ENCODE measurements at regions of chr15 and their contacts with region 1.

Region 1: DNA sequence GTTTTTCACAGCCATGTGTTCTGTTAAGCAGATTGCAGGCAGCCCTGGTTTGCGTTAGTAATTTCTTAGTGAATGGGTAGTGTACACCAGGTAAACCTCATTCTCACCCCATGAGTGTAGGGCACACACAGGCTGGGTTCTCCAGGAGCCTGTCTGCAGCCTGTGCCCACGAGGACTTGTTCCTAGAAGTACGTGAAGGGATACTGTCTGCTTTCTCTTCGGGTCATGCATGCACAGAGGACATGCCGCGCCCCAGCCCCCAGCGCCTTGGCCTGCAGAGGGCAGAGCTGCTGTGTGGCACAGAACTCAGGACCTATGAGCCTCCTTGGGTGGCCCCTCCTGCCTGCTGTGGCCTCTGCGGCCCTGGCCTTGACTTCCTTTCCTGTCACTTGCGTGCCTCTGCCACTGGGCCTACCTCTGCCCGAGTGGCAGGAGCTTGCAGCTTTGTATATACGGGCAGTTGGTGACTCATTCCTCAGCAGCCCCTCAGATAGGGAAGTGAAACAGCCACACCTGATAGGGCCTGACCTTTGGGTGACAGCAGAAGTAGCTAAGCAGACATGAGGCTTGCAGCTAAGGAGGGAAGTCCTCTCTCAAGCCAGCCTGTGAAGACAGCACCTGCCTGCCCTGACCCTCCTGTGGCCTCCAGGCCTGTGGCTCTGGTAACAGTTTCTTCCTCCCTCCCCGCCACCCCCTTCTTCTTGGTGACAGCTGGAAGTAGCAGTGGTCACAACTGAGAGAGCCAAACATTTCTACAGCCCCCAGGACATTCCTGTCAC is 19.5 kb downstream of the PPCDC start:
- DNase-seq: peak; percentile 94
- ATAC-seq: peak; percentile 89
- H3K4me3 ChIP-seq: no peak overlapping the region
- H3K4me3 Mint-ChIP-seq: peak overlapping the region; percentile 25
- H3K27ac ChIP-seq: peak overlapping the region; percentile 76 to 80
- H3K27ac Mint-ChIP-seq: peak overlapping the region; percentile 89
- H3K4me1 ChIP-seq: peaks cover 48 to 65% of the 10 kb centered on the region in 2 donors
- H3K4me1 Mint-ChIP-seq: peaks cover 57% of the 10 kb centered on the region
- H3K27me3 ChIP-seq: no peaks in the 10 kb centered on the region
- H3K27me3 Mint-ChIP-seq: no peaks in the 10 kb centered on the region
- CTCF ChIP-seq: peak; percentile 61

Region 2: DNA sequence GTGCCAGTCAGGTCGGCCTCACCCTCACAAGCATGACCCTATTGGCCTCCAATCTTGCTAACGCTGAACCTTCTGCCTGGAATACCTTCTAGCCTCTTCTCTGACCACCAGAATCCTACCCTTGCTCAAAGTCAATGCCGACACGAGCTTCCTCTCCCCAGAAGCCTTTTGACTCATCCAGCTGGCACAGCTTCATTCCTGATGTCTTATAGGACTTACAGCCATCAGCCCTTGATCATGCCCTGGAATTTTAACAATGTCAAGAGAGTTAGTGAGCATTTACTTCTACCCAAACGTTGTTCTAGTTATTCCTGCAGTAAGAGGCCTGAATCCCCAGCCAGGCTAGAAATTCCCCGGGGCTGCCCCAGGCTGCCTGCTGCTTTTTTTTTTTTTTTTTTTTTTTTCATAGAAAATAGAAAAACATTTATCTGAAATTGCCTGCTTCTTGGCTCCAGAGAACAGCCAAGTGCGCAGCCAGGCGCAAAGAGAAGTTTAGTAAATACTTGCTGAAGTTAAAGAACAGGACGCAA is 290.4 kb before region 1 on chr15:
- CTCF ChIA-PET with region 1: no interaction called
- POLR2A ChIA-PET with region 1: no interaction called
- intact Hi-C with region 1: no loop called
- DNase-seq: no peak
- ATAC-seq: no peak
- H3K4me3 ChIP-seq: no peak overlapping the region
- H3K4me3 Mint-ChIP-seq: no peak overlapping the region
- H3K27ac ChIP-seq: no peak overlapping the region
- H3K27ac Mint-ChIP-seq: no peak overlapping the region
- H3K4me1 ChIP-seq: no peaks in the 10 kb centered on the region
- H3K4me1 Mint-ChIP-seq: no peaks in the 10 kb centered on the region
- H3K27me3 ChIP-seq: no peaks in the 10 kb centered on the region
- H3K27me3 Mint-ChIP-seq: peaks cover 16% of the 10 kb centered on the region
- CTCF ChIP-seq: no peak

Region 3: GRCh38 chr15:75023181-75023871 is 19.6 kb before region 1 on chr15 and contains the start of gene PPCDC:
- CTCF ChIA-PET with region 1: interaction called, 65 read pairs
- POLR2A ChIA-PET with region 1: interaction called, 5 read pairs
- intact Hi-C with region 1: loop called (anchors 1 kb)
- DNase-seq: peak; percentile 93
- ATAC-seq: peak; percentile 100
- H3K4me3 ChIP-seq: peak within 1 kb of the TSS; percentile 72 to 96 (median 94)
- H3K4me3 Mint-ChIP-seq: peak within 1 kb of the TSS; percentile 97
- H3K27ac ChIP-seq: peak within 1 kb of the TSS; percentile 49 to 72
- H3K27ac Mint-ChIP-seq: peak within 1 kb of the TSS; percentile 94
- H3K4me1 ChIP-seq: peaks cover 5 to 18% of the 10 kb centered on the region in 2 donors
- H3K4me1 Mint-ChIP-seq: peaks cover 14% of the 10 kb centered on the region
- H3K27me3 ChIP-seq: peaks cover 0 to 33% (median 15%) of the 10 kb centered on the region in 4 experiments
- H3K27me3 Mint-ChIP-seq: peaks cover 23% of the 10 kb centered on the region
- CTCF ChIP-seq: no peak
- total RNA-seq, gene PPCDC: 14.8 and 15.1 TPM in 2 replicates

Region 4: DNA sequence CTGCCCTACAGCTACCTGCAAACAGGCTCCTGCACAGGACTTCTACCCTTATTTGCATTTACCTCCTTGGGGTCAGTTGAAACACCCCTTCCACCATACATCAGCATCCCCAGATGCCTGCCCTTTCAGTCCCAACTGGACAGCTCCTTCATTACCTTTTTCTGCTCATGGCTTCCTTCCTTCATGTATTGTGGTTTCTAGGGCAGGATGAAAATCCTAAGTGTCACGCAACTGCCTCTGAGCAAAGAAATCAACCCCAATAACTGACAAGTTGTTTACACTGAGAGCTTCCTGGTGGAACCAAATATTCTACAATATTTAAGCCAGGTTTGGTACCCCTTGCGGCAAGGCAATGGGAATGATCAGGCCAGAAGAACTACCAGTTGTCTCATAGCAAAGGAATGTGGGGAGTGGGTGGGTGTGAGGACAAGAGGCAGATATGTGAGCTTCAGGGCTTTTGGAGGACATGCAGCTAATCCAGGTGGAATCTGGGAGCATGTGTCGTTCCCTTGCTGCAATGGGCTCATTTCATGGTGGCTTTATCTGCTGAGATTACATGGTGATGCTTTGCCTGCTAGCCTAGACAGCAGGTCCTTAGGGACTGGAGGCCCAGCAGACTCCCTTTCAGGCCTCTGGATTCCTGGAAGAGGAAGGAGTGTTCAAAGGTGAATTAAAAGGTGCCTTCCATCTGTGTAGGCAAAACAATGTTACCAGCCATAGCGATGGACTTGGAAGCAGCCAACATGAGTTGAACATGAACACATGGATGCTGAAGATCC is 15.4 kb after region 1 on chr15:
- CTCF ChIA-PET with region 1: interaction called, 21 read pairs
- POLR2A ChIA-PET with region 1: no interaction called
- intact Hi-C with region 1: no loop called
- DNase-seq: no peak
- ATAC-seq: no peak
- H3K4me3 ChIP-seq: no peak overlapping the region
- H3K4me3 Mint-ChIP-seq: no peak overlapping the region
- H3K27ac ChIP-seq: no peak overlapping the region
- H3K27ac Mint-ChIP-seq: no peak overlapping the region
- H3K4me1 ChIP-seq: no peaks in the 10 kb centered on the region
- H3K4me1 Mint-ChIP-seq: no peaks in the 10 kb centered on the region
- H3K27me3 ChIP-seq: no peaks in the 10 kb centered on the region
- H3K27me3 Mint-ChIP-seq: no peaks in the 10 kb centered on the region
- CTCF ChIP-seq: no peak

Region 5: GRCh38 chr15:75076277-75076676 is 33.4 kb after region 1 on chr15:
- CTCF ChIA-PET with region 1: interaction called, 24 read pairs
- POLR2A ChIA-PET with region 1: interaction called, 6 read pairs
- intact Hi-C with region 1: loop called (anchors 2 kb)
- DNase-seq: no peak
- ATAC-seq: no peak
- H3K4me3 ChIP-seq: no peak overlapping the region
- H3K4me3 Mint-ChIP-seq: no peak overlapping the region
- H3K27ac ChIP-seq: no peak overlapping the region
- H3K27ac Mint-ChIP-seq: no peak overlapping the region
- H3K4me1 ChIP-seq: peaks cover 17 to 23% of the 10 kb centered on the region in 2 donors
- H3K4me1 Mint-ChIP-seq: peaks cover 32% of the 10 kb centered on the region
- H3K27me3 ChIP-seq: no peaks in the 10 kb centered on the region
- H3K27me3 Mint-ChIP-seq: no peaks in the 10 kb centered on the region
- CTCF ChIP-seq: no peak

Region 6: DNA sequence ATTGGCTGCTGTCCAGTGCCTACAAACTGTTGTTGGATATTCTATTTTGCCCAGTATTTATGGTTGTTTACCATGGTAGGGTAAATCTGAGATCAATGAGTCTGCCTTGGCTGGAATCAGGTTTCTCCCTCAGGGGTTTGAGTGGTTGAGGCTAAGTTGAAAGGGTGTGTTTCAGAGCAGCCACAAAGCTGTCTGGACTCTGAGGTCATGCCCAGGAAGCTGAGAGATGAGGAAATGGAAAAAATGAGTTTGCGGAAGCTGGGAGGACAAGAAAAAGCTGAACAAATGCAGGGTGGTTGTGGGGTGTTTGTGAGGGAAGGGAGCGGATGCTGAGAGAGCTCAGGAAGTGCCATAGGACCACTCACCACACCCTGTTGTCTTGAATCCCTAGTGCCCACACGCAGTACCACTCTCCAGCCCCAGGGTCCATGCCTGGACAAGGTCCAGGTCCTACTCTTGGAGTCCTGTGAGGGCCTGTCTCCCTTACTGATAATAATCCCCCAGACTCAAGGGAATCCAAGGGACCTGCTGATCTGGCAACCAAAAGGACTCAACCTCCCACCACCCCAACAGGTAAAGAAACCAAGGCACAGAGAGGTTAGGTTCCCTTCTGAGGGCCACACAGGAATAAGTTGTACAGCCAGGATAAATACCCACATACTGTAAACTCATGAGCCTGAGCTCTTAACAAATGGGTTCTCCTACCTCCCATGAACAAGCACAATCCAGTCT is 62.1 kb after region 1 on chr15:
- CTCF ChIA-PET with region 1: interaction called, 45 read pairs
- POLR2A ChIA-PET with region 1: interaction called, 7 read pairs
- intact Hi-C with region 1: loop called (anchors 2 kb)
- DNase-seq: peak; percentile 44
- ATAC-seq: peak; percentile 37
- H3K4me3 ChIP-seq: no peak overlapping the region
- H3K4me3 Mint-ChIP-seq: peak overlapping the region; percentile 66
- H3K27ac ChIP-seq: peak overlapping the region; percentile 5 to 10
- H3K27ac Mint-ChIP-seq: peak overlapping the region; percentile 92
- H3K4me1 ChIP-seq: peaks cover 37 to 45% of the 10 kb centered on the region in 2 donors
- H3K4me1 Mint-ChIP-seq: peaks cover 40% of the 10 kb centered on the region
- H3K27me3 ChIP-seq: peaks cover 0 to 11% (median 4%) of the 10 kb centered on the region in 4 experiments
- H3K27me3 Mint-ChIP-seq: peaks cover 23% of the 10 kb centered on the region
- CTCF ChIP-seq: no peak

Region 7: DNA sequence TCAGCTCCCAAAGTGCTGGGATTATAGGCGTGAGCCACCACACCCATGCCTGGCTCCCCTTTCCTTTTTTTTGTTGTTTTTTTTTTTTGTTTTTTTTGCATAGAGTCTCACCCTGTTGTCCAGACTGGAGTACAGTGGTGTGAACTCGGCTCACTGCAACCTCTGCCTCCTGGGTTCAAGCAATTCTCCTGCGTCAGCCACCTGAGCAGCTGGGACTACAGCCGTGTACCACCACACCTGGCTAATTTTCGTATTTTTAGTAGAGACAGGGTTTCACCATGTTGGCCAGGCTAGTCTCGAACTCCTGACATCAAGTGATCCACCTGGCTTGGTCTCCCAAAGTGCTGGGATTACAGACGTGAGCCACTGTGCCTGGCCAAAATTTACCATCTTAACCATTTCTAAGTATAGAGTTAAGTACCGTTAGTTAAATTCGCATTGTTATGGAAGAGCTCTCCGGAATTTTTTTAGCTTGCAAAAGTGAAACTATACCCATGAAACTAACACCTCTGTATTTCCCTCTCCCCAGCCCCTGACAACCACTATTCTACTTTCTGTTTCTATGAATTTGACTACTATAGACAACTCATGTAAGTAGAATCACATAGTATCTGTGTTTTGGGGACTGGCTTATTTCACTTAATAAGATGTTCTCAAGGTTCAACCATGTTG is 87.8 kb after region 1 on chr15:
- CTCF ChIA-PET with region 1: interaction called, 18 read pairs
- POLR2A ChIA-PET with region 1: no interaction called
- intact Hi-C with region 1: loop called (anchors 1 kb)
- DNase-seq: peak; percentile 70
- ATAC-seq: peak; percentile 93
- H3K4me3 ChIP-seq: peak overlapping the region in 4 of 5 experiments; percentile 16 to 51 (median 40)
- H3K4me3 Mint-ChIP-seq: peak overlapping the region; percentile 73
- H3K27ac ChIP-seq: no peak overlapping the region
- H3K27ac Mint-ChIP-seq: peak overlapping the region; percentile 27
- H3K4me1 ChIP-seq: peaks cover 11 to 18% of the 10 kb centered on the region in 2 donors
- H3K4me1 Mint-ChIP-seq: peaks cover 17% of the 10 kb centered on the region
- H3K27me3 ChIP-seq: no peaks in the 10 kb centered on the region
- H3K27me3 Mint-ChIP-seq: no peaks in the 10 kb centered on the region
- CTCF ChIP-seq: no peak

Region 8: DNA sequence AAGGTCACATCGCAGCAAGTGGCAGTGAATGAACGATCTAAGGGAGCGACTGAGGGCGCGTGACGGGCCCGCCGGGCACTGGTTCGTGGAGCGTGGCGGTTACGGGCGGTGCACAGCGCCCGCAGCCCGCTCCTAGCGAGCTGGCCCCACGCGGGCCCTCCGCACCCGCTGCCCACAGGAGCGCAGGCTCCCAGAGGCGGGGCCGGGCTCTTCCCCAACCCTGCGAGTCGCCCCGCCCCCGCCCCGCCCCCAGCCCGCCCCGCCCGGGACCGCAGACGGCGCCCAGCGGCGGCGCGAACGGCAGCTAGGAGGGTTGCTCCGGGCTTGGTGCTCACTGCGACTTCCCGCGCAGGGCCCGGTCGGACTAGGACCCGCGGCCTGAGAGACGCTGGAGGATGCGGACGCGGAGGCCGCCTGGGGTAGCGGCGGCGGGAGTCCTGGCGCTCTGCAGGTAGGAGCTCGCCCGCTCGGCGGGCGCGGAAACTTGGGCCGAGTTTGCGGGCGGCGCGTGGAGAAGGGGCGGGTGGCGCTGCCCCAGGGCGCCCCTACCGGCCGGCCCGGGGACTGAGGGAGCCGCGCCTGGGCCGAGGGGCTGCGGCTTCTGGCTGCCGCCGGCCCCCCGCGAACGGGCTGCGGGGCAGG is 158.8 kb after region 1 on chr15 and contains the start of gene C15orf39:
- CTCF ChIA-PET with region 1: interaction called, 251 read pairs
- POLR2A ChIA-PET with region 1: interaction called, 45 read pairs
- intact Hi-C with region 1: loop called (anchors 1 kb)
- DNase-seq: peak; percentile 89
- ATAC-seq: peak; percentile 59
- H3K4me3 ChIP-seq: peak within 1 kb of the TSS; percentile 53 to 77 (median 73)
- H3K4me3 Mint-ChIP-seq: peak within 1 kb of the TSS; percentile 98
- H3K27ac ChIP-seq: peak within 1 kb of the TSS; percentile 59 to 86
- H3K27ac Mint-ChIP-seq: peak within 1 kb of the TSS; percentile 96
- H3K4me1 ChIP-seq: peaks cover 24 to 51% of the 10 kb centered on the region in 2 donors
- H3K4me1 Mint-ChIP-seq: peaks cover 41% of the 10 kb centered on the region
- H3K27me3 ChIP-seq: peaks cover 0 to 19% (median 5%) of the 10 kb centered on the region in 4 experiments
- H3K27me3 Mint-ChIP-seq: no peaks in the 10 kb centered on the region
- CTCF ChIP-seq: peak; percentile 97
- total RNA-seq, gene C15orf39: 72.1 and 72.7 TPM in 2 replicates

Region 9: GRCh38 chr15:76190834-76191538 is 1148.1 kb after region 1 on chr15:
- CTCF ChIA-PET with region 1: no interaction called
- POLR2A ChIA-PET with region 1: no interaction called
- intact Hi-C with region 1: no loop called
- DNase-seq: peak; percentile 72
- ATAC-seq: peak; percentile 94
- H3K4me3 ChIP-seq: peak overlapping the region in 3 of 5 experiments; percentile 13 to 47 (median 30)
- H3K4me3 Mint-ChIP-seq: peak overlapping the region; percentile 74
- H3K27ac ChIP-seq: no peak overlapping the region
- H3K27ac Mint-ChIP-seq: no peak overlapping the region
- H3K4me1 ChIP-seq: peaks cover 14 to 16% of the 10 kb centered on the region in 2 donors
- H3K4me1 Mint-ChIP-seq: peaks cover 16% of the 10 kb centered on the region
- H3K27me3 ChIP-seq: peaks cover 0 to 42% (median 7%) of the 10 kb centered on the region in 4 experiments
- H3K27me3 Mint-ChIP-seq: peaks cover 35% of the 10 kb centered on the region
- CTCF ChIP-seq: peak; percentile 89

Measured in B cell (primary cell).